Right ventricle myocardium inferior (tissue), 1 donor: ENCODE measurements at regions of chr7 and their contacts with region 1.

Region 1: DNA sequence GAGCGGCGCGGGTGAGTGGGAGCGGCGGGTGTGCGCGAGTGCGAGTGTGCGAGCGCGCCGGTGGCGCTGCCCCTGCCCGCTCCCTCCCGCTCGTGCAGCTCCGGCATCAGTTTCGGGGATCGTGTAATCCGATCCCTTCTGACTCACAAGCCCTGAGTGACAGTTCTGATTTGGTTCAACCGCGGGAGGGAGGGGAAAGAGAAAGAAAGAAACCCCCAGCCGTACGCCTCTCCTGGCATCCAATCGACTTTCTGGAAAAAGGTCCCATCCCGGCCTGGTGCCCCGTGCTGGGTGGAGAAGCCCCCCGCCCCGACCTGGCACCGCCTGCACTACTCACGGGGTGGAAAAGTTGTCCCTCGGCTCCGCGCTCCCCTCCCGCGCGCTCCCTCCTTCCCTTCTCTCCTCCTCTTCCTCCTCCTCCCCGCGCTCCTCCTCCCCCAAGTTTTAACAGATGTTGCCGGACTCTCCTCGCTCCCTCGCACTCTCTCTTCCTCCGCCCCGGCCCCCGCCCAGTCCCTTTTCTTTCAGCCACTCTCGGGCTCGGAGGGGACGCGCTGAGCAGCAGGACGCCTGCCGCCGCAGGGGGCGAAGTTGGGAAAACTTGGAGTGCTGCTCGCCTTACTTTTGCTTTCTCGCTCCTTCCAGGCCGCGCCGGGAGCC is at the start of gene GLI3:
- DNase-seq: peak; percentile 89
- ATAC-seq: peak; percentile 92
- total RNA-seq, gene GLI3: 3.9 TPM

Region 2: GRCh38 chr7:42097757-42098191 is 139.5 kb before region 1 on chr7:
- intact Hi-C with region 1: loop called (anchors 5 kb)
- DNase-seq: no peak
- ATAC-seq: no peak

Region 3: DNA sequence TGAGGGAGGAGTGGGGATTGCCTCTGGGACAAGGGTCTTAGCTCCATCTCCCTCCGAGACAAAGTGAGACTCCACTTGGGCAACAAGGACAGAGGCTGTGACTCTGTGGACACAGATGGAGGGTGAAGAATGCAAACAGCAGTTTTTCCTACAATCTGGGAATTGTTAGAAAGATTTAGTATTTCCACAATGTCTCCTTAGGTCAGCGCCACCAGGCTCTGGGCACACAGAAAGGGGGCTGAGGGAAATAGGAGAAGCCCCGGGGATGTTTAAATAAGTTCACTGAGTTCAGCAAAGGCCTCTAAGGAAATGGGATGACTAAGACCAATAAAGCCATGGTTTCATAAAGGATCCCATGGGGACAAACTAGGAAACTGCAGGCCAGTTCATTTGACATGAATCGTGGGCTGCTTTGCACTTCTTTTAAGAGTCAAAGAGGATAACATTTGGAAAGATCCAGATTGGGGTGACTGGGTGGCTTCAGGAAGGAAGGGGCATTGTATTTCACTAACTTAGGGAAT is 219.5 kb after region 1 on chr7:
- intact Hi-C with region 1: no loop called
- DNase-seq: no peak
- ATAC-seq: no peak